ENCODE measurements at regions of chr1 and their contacts with region 1.

Region 1: GRCh38 chr1:110986407-110986891 is 22.7 kb upstream of the LRIF1 start:
- DNase-seq: peak in 1 of 9 experiments; percentile 11
- ATAC-seq: no peak
- H3K4me3 ChIP-seq: no peak overlapping the region
- H3K4me3 Mint-ChIP-seq: no peak overlapping the region
- H3K27ac ChIP-seq: no peak overlapping the region
- H3K27ac Mint-ChIP-seq: no peak overlapping the region
- H3K4me1 ChIP-seq: peaks cover 7% of the 10 kb centered on the region
- H3K4me1 Mint-ChIP-seq: peaks cover 18% of the 10 kb centered on the region
- H3K27me3 ChIP-seq: no peaks in the 10 kb centered on the region
- H3K27me3 Mint-ChIP-seq: peaks cover 2% of the 10 kb centered on the region
- CTCF ChIP-seq: no peak

Region 2: DNA sequence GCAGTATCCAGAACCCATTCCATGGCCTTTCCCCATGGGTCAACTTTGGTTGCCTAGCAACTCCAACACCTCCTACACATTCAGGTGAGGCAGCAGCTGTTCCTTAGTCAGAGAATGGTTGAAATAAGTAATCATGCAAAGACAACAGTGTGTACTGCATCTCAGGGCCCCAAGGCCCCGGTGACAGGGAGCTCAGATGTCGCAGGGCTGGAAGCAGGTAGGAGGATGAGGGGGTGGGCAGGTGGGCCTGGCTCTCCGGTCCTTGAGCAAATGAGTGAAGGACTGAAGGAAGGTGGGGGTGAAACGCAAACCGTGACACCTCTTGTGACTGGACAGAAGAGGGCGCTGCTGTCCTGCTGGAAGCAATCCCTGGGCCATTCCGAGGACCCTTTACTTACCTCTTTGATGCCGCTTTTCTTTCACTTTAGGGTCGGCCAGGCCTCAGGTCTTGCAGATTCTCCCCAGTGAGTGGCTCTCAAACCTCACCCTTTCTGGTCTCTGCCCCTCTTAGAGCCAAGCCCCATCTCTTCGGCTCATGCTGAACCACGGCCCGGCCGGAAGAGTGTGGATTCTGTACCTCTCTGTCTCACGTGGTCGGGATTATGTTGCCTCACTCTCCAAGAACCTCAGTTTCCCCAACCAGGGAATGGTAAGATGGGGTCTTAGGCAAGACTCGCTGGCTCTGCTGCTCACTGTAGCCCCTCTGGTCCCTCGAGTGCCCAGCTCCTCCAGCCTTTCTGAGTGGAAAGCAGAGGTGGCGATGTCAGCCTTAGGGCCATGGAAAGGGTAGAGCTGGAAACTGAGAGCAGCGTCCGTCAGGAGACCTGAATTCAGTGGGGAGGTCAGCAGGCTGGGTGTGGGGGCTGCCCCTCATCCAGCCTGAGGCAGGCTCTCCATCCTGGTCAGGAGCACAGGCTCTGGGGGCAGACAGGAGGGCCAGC is 461.9 kb before region 1 on chr1:
- CTCF ChIA-PET with region 1: interaction called, 13 read pairs
- POLR2A ChIA-PET with region 1: no interaction called
- intact Hi-C with region 1: no loop called
- DNase-seq: peak; percentile 8 to 69 (median 44)
- ATAC-seq: peak; percentile 77
- H3K4me3 ChIP-seq: no peak overlapping the region
- H3K4me3 Mint-ChIP-seq: peak overlapping the region; percentile 22
- H3K27ac ChIP-seq: no peak overlapping the region
- H3K27ac Mint-ChIP-seq: no peak overlapping the region
- H3K4me1 ChIP-seq: peaks cover 6% of the 10 kb centered on the region
- H3K4me1 Mint-ChIP-seq: peaks cover 3% of the 10 kb centered on the region
- H3K27me3 ChIP-seq: no peaks in the 10 kb centered on the region
- H3K27me3 Mint-ChIP-seq: peaks cover 26% of the 10 kb centered on the region
- CTCF ChIP-seq: peak; percentile 64

Region 3: DNA sequence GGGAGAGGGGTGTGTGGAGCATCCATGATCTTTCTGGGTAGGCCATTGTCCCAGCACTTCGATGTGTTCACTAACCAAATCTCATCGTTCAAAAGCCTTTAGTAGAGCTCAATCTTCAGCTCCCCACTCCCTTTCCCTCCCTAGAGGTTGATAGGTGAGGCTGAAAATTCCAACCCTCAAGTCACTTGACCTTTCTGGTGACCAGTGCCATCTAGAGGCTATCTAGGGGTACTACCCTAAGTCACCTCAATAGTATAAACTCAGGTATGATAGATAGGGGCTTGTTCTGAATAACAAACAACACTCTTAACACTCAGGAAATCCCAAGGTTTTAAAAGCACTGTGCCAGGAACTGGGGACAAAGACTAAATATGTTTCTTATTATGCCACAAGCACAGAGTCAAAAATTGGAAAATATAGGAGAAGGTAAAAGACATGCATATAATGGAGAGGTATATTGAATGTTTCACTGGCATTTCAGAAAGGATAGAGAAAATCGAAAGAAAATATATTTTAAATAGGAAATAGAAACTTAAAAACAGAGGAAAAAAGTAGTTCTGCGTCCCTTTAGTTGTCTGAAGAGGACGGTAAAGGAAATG is 156.4 kb before region 1 on chr1:
- CTCF ChIA-PET with region 1: no interaction called
- POLR2A ChIA-PET with region 1: no interaction called
- intact Hi-C with region 1: loop called in 1 of 2 experiments (anchors 5 kb)
- DNase-seq: peak in 6 of 9 experiments; percentile 8 to 73 (median 28)
- ATAC-seq: peak; percentile 97
- H3K4me3 ChIP-seq: no peak overlapping the region
- H3K4me3 Mint-ChIP-seq: no peak overlapping the region
- H3K27ac ChIP-seq: no peak overlapping the region
- H3K27ac Mint-ChIP-seq: no peak overlapping the region
- H3K4me1 ChIP-seq: peaks cover 5% of the 10 kb centered on the region
- H3K4me1 Mint-ChIP-seq: peaks cover 15% of the 10 kb centered on the region
- H3K27me3 ChIP-seq: no peaks in the 10 kb centered on the region
- H3K27me3 Mint-ChIP-seq: no peaks in the 10 kb centered on the region
- CTCF ChIP-seq: peak; percentile 91

Measured in CD8-positive, alpha-beta T cell (primary cell).